ENCODE measurements at regions of chr22 and their contacts with region 1.

Region 1: DNA sequence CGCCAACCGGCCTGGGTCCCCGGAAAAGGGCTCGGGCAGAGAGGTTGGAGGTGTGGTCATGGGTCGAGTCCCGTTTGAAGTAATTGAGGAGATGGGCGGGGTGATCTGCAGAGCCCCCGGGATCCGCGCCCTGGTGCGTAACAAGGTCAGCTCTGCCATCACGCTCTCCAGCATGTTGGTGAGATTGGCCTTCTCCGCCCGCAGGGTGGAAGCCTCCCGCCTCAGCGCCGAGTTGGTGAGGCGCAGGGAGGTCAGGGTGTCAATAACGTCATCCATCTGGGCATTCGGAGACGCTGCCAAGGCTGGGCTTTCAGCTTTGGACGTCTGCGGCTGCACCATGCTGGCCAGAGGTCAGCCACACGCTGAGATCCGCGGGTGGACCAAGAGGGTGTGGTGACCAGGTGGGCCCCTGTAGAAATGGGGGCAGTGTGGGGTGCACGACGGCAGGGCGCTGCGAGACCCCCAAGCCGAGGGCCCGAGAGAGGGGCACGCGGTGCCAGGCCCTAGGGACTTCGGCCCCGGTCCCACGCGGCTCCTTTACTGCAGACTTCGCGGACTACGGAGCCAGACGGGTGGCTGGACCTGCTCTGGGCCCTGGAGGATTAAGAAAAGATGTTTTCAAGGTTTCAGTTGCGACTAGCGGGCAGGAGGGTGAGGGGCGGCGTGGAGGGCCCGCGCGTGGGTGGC is 672 bp downstream of the RTL6 start:
- DNase-seq: peak in 1 of 2 donors; percentile 46
- ATAC-seq: no peak
- H3K4me3 ChIP-seq: peak overlapping the region; percentile 52
- H3K4me3 Mint-ChIP-seq: peak overlapping the region; percentile 79
- H3K27ac ChIP-seq: peak overlapping the region; percentile 76
- H3K27ac Mint-ChIP-seq: peak overlapping the region; percentile 85 to 95
- H3K4me1 ChIP-seq: peaks cover 46% of the 10 kb centered on the region
- H3K4me1 Mint-ChIP-seq: peaks cover 36 to 54% of the 10 kb centered on the region in 2 donors
- H3K27me3 ChIP-seq: no peaks in the 10 kb centered on the region
- H3K27me3 Mint-ChIP-seq: peaks cover under 1 to 5% of the 10 kb centered on the region in 2 donors
- CTCF ChIP-seq: no peak

Region 2: DNA sequence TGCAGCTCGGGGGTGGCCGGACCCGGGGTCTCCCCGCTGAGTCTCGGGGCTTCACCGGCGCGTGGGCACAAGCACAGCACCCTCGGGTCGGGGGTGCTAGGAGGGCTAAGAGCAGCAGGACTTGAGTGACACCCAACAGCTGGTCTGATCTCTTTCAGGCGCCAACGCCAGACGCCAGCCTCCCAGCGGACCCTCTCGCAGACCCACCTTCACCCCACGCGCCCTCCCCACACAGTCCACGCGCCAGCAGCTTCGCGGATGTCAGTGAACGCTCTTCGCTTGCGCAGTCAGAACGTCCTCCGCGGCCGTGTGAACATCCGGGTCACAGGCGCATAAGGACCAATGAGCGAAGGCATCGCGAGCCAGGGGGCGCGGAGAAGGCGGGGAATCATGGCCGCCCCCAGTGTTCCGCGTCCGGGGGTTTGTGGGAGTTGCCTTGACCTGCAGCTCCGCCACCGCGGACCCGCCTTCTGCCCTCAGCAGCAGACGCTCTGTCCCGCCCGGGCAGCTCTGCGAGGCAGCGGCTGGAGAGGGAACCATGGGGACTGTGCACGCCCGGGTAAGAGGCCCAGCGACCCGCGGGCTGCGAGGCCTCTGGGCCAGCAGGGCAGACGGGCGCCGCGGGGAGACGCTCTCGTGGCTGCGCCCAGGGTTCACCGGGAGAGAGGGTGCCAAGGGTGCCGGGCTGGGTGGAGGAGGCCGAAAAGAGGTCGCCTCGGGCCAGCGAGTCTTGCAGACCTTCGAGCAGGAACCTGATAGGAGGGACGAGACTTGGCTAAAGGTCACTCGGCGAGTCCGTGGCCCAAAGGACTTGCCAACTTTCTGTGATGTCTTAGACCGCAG is 542.1 kb before region 1 on chr22 and contains the start of gene SAMM50:
- intact Hi-C with region 1: loop called (anchors 10 kb)
- DNase-seq: peak; percentile 92 to 96
- ATAC-seq: peak; percentile 96 to 98 (median 97)
- H3K4me3 ChIP-seq: peak within 1 kb of the TSS; percentile 69
- H3K4me3 Mint-ChIP-seq: peak within 1 kb of the TSS; percentile 94
- H3K27ac ChIP-seq: peak within 1 kb of the TSS; percentile 84
- H3K27ac Mint-ChIP-seq: peak within 1 kb of the TSS; percentile 85 to 87
- H3K4me1 ChIP-seq: peaks cover 25% of the 10 kb centered on the region
- H3K4me1 Mint-ChIP-seq: peaks cover 24 to 38% of the 10 kb centered on the region in 2 donors
- H3K27me3 ChIP-seq: no peaks in the 10 kb centered on the region
- H3K27me3 Mint-ChIP-seq: peaks cover 9 to 11% of the 10 kb centered on the region in 2 donors
- CTCF ChIP-seq: no peak
- total RNA-seq, gene SAMM50: 25.9 to 30.6 (median 29.7) TPM

Measured in natural killer cell (primary cell).